ENCODE measurements at regions of chr14 and their contacts with region 1.

Region 1: GRCh38 chr14:53493320-53494259 is 340.5 kb upstream of the DDHD1 start:
- DNase-seq: no peak
- H3K4me3 ChIP-seq: no peak overlapping the region
- H3K27ac ChIP-seq: no peak overlapping the region
- H3K4me1 ChIP-seq: peaks cover 17% of the 10 kb centered on the region
- H3K27me3 ChIP-seq: no peaks in the 10 kb centered on the region
- CTCF ChIP-seq: no peak

Region 2: DNA sequence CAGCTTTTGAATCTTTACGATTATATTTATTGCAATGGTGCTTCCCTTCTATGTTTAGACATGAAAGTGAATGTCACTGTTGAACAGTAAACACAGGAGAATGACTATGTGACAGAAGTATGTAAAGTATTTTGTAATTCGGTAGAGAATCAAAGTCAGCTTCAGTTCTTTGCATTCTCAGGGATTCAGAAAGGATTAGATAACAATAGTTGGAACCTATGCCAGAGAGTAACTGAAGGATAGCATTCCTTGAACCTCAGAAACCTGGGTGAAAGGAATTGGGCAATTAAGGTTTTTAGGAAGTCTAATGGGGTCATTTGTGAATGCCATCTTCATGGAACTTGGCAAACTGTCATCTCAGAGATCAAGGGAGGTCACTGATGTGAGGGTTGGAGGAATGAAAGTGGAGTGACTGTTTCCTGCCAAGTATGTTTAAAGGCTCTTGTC is 35.2 kb before region 1 on chr14:
- CTCF ChIA-PET with region 1: no interaction called
- dilution Hi-C with region 1: no loop called
- in situ Hi-C with region 1: no loop called
- intact Hi-C with region 1: no loop called
- DNase-seq: peak; percentile 26
- H3K4me3 ChIP-seq: no peak overlapping the region
- H3K27ac ChIP-seq: no peak overlapping the region
- H3K4me1 ChIP-seq: peaks cover 7% of the 10 kb centered on the region
- H3K27me3 ChIP-seq: no peaks in the 10 kb centered on the region
- CTCF ChIP-seq: no peak

Region 3: GRCh38 chr14:53509276-53510244 is 16.0 kb after region 1 on chr14:
- CTCF ChIA-PET with region 1: no interaction called
- dilution Hi-C with region 1: no loop called
- in situ Hi-C with region 1: no loop called
- intact Hi-C with region 1: loop called (anchors 2 kb)
- DNase-seq: peak; percentile 97
- H3K4me3 ChIP-seq: no peak overlapping the region
- H3K27ac ChIP-seq: peak overlapping the region; percentile 87
- H3K4me1 ChIP-seq: peaks cover 23% of the 10 kb centered on the region
- H3K27me3 ChIP-seq: no peaks in the 10 kb centered on the region
- CTCF ChIP-seq: no peak